ENCODE measurements at regions of chr19 and their contacts with region 1.

Region 1: GRCh38 chr19:13521066-13521465 is 14.8 kb upstream of the CACNA1A start:
- DNase-seq: no peak
- H3K4me3 ChIP-seq: no peak overlapping the region
- H3K27ac ChIP-seq: no peak overlapping the region
- H3K4me1 ChIP-seq: no peaks in the 10 kb centered on the region
- H3K27me3 ChIP-seq: no peaks in the 10 kb centered on the region
- CTCF ChIP-seq: no peak

Region 2: GRCh38 chr19:13484166-13484565 is 36.9 kb before region 1 on chr19:
- CTCF ChIA-PET with region 1: no interaction called
- dilution Hi-C with region 1: loop called (anchors 5 kb)
- in situ Hi-C with region 1: no loop called
- intact Hi-C with region 1: no loop called
- DNase-seq: no peak
- H3K4me3 ChIP-seq: no peak overlapping the region
- H3K27ac ChIP-seq: no peak overlapping the region
- H3K4me1 ChIP-seq: no peaks in the 10 kb centered on the region
- H3K27me3 ChIP-seq: no peaks in the 10 kb centered on the region
- CTCF ChIP-seq: no peak